Transverse colon (tissue), 4 donors: ENCODE measurements at regions of chr9 and their contacts with region 1.

Region 1: GRCh38 chr9:132190966-132191365 is 29.1 kb downstream of the NTNG2 start:
- DNase-seq: no peak
- H3K4me3 ChIP-seq: no peak overlapping the region
- H3K27ac ChIP-seq: no peak overlapping the region
- H3K4me1 ChIP-seq: no peaks in the 10 kb centered on the region
- H3K27me3 ChIP-seq: peaks cover 44% of the 10 kb centered on the region
- CTCF ChIP-seq: no peak
- EP300 ChIP-seq: no peak
- POLR2A ChIP-seq: no peak

Region 2: DNA sequence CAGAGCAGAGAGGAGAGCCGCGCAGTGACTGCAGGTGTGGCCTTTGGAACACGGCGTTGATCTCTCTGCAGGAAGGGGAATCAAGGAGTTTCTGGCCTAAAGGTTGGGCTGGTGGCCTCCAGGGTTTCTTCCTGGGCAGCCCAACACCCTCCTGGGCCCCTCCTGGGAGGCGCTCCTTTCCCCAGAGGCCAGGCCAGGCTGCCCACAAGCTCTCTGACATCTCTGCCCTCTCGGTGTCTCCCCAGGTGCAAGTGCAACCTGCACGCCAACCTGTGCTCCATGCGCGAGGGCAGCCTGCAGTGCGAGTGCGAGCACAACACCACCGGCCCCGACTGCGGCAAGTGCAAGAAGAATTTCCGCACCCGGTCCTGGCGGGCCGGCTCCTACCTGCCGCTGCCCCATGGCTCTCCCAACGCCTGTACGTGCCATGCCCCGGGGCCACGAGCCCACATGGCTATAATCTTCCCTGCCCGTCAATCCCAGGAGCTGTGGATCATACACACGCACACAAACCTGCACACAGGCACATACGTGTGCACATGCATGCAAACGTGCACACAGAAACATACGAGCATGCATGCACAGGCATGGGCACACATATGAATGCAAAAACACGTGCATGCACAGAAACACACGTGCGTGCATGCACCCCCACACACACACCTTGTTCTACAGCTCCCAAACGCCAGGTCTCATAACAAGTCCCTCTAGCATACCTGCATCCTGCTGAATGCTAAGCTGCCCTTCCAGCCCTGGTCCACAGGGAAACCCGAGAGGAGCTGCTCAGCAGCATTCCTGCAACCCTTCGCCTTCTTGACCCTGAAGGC is 35.9 kb after region 1 on chr9:
- in situ Hi-C with region 1: no loop called
- intact Hi-C with region 1: loop called (anchors 1 kb)
- DNase-seq: no peak
- H3K4me3 ChIP-seq: no peak overlapping the region
- H3K27ac ChIP-seq: no peak overlapping the region
- H3K4me1 ChIP-seq: no peaks in the 10 kb centered on the region
- H3K27me3 ChIP-seq: peaks cover 19% of the 10 kb centered on the region
- CTCF ChIP-seq: no peak
- EP300 ChIP-seq: no peak
- POLR2A ChIP-seq: no peak

Region 3: GRCh38 chr9:132274861-132275260 is 83.9 kb after region 1 on chr9:
- in situ Hi-C with region 1: no loop called
- intact Hi-C with region 1: no loop called
- DNase-seq: no peak
- H3K4me3 ChIP-seq: no peak overlapping the region
- H3K27ac ChIP-seq: no peak overlapping the region
- H3K4me1 ChIP-seq: no peaks in the 10 kb centered on the region
- H3K27me3 ChIP-seq: no peaks in the 10 kb centered on the region
- CTCF ChIP-seq: no peak
- EP300 ChIP-seq: no peak
- POLR2A ChIP-seq: no peak